Gastrocnemius medialis (tissue), 4 donors: ENCODE measurements at regions of chr1 and their contacts with region 1.

Region 1: DNA sequence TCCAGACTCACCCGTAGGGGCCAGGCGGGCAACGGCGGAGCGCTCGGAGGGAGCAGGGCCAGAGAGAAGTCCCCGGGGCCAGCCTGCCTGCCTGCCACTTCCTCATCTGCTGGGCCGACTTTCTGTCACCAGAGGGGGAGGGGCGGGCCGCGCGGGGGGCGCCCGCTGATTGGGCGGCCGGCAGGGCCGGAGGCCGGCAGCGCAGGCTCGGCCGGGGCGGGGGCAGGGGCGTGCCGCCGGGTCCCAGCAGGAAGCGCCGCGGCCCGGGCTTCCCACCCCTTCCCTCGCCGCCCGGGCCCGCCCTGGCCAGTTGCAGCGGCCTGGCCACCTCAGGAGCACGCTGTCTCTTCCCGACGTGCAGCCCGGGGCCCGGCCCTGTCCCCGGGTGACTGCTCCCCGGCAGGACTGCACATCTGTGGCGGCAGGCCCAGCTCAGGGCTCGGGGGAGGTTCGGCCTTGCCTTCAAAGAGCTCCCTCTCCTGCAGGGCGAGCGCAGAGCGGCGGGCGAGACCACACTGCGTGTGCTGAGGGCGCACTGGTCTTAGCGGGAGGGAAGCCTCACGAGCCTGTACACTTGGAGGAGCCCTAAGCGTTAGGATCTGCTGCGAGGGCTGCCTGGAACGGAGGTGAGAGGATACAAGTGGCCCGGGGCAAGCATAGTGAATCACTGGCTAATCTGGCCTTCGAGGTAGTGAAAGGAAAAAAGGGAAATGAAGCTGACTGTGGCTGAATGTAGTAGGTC is at the start of gene ELOVL1:
- DNase-seq: peak; percentile 80 to 89
- ATAC-seq: peak; percentile 90 to 93
- H3K4me3 ChIP-seq: peak within 1 kb of the TSS; percentile 86 to 95 (median 94)
- H3K27ac ChIP-seq: peak within 1 kb of the TSS; percentile 89 to 97 (median 94)
- H3K4me1 ChIP-seq: peaks cover 17 to 24% of the 10 kb centered on the region in 2 donors
- H3K27me3 ChIP-seq: no peaks in the 10 kb centered on the region
- CTCF ChIP-seq: peak in 4 of 5 experiments; percentile 12 to 41 (median 28)
- POLR2A ChIP-seq: peak; percentile 66 to 75
- total RNA-seq, gene ELOVL1: 19.6 to 26.7 (median 21.4) TPM

Region 2: GRCh38 chr1:43171876-43172526 is 196.1 kb before region 1 on chr1 and contains the starts of genes CFAP57 and EBNA1BP2:
- in situ Hi-C with region 1: no loop called
- intact Hi-C with region 1: loop called (anchors 5 kb)
- DNase-seq: peak; percentile 79 to 90
- ATAC-seq: peak; percentile 99 to 100
- H3K4me3 ChIP-seq: peak within 1 kb of the TSS; percentile 85 to 94 (median 92)
- H3K27ac ChIP-seq: peak within 1 kb of the TSS; percentile 50 to 81 (median 74)
- H3K4me1 ChIP-seq: peaks cover 14% of the 10 kb centered on the region in 2 donors
- H3K27me3 ChIP-seq: peaks cover 0 to 8% (median 0%) of the 10 kb centered on the region in 3 donors
- CTCF ChIP-seq: no peak
- POLR2A ChIP-seq: peak in 1 of 2 donors; percentile 29
- total RNA-seq, gene CFAP57: 0.10 to 0.13 TPM in 2 of 4 donors, not detected in the others
- total RNA-seq, gene EBNA1BP2: 41.2 to 68.4 (median 59.1) TPM

Region 3: DNA sequence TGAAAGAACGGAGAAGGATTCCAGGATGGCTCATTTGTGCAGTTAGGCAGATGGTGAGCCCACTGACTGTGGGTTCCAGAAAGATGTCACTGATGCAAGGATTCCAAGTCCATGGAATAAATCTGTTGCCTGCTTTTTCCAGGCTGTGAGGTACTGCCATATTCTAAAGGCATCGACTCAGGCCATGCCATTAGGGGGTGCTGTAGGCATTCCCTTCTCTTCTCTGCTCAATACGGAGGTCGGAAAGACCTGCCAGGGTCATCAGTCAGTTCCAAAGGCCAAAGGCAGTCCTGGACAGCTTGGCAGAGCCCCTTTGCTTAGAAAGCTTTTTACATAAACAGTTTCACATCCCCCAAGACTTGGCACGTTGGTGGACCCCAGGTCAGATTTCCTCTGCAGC is 130.0 kb before region 1 on chr1:
- in situ Hi-C with region 1: no loop called
- intact Hi-C with region 1: loop called (anchors 1 kb)
- DNase-seq: peak in 1 of 2 donors; percentile 44
- ATAC-seq: peak; percentile 66 to 80
- H3K4me3 ChIP-seq: no peak overlapping the region
- H3K27ac ChIP-seq: peak overlapping the region in 1 of 4 donors; percentile 18
- H3K4me1 ChIP-seq: no peaks in the 10 kb centered on the region
- H3K27me3 ChIP-seq: no peaks in the 10 kb centered on the region
- CTCF ChIP-seq: peak in 4 of 5 experiments; percentile 31 to 55 (median 53)
- POLR2A ChIP-seq: no peak

Region 4: DNA sequence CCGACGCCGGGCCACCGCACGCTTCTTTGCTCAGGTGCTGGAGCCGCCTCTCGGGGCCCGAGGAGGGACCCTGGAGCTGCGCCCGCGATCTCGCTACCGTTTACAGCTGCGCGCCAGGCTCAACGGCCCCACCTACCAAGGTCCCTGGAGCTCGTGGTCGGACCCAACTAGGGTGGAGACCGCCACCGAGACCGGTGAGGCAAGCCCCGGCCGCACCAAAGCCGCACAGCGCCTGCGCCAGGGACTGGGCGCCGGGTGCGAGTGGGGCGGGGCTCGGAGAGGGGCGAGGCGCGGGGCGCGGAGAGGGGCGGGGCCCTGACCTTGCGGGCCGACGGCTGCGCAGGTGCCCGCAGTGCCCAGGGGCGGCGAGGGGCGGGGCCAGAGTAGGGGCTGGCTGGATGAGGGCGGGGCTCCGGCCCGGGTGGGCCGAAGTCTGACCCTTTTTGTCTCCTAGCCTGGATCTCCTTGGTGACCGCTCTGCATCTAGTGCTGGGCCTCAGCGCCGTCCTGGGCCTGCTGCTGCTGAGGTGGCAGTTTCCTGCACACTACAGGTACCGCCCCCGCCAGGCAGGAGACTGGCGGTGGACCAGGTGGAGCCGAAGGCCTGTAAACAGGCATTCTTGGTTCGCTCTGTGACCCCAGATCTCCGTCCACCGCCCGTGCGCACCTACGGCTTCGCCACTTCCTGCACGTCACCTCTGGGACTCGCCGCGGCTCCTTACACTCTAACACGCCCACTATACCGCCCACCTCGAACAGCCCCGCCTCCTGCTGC is 19.1 kb before region 1 on chr1:
- in situ Hi-C with region 1: no loop called
- intact Hi-C with region 1: loop called (anchors 1 kb)
- DNase-seq: peak; percentile 46 to 78
- ATAC-seq: peak; percentile 71 to 83
- H3K4me3 ChIP-seq: peak overlapping the region; percentile 64 to 83 (median 70)
- H3K27ac ChIP-seq: peak overlapping the region; percentile 66 to 85 (median 78)
- H3K4me1 ChIP-seq: peaks cover 16 to 18% of the 10 kb centered on the region in 2 donors
- H3K27me3 ChIP-seq: no peaks in the 10 kb centered on the region
- CTCF ChIP-seq: no peak
- POLR2A ChIP-seq: peak; percentile 30 to 37

Region 5: DNA sequence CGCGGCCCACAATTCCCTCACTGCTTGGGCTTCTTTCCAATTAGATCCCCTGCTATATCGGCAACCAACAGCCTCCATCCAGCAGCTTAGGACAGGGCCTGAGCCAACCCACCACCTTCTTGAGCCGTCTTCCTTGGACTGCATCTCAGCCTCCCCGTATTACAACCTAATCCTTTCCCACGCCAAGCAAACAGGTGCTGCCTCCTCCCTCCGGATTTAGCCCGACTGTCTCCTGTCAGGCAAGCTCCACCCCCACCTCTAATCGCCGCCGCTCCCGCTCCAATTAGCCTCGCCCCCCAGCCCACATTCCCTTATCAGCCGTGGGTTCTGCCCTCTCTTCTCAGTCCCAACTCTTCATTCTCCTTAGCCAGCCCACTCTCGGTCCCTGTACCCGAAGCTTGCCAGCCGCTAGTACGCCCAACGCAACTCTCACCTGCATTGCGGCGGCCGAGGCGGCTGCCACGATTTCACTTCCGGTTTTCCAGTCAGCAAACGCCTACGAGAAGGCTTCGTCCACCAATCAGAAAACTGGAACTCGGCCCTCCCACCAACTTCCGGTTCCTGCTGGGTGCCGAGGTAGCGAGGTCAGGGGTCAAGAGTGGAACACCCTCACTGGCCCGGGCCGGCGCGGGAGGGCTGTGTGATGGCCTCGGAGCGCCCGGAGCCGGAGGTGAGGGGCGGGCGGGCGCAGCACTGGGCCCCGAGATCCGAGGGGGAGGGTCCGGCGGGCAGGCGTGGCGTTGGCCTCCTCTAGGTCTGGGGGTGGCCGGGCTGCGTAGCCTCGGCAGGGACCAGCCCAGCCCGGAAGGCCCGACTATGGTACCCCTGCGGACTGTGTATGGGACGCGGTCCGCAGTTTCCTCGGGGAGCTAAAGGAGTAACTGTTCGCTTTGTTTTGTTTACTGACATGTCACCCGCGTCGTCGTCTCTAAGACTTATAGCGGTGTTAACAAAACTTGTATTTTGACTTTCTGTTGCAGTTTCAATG is 21.5 kb after region 1 on chr1 and contains the starts of genes MED8 and SZT2:
- in situ Hi-C with region 1: no loop called
- intact Hi-C with region 1: loop called (anchors 1 kb)
- DNase-seq: peak; percentile 92 to 97
- ATAC-seq: peak; percentile 99 to 100
- H3K4me3 ChIP-seq: peak within 1 kb of the TSS; percentile 81 to 96 (median 92)
- H3K27ac ChIP-seq: peak within 1 kb of the TSS; percentile 88 to 94 (median 90)
- H3K4me1 ChIP-seq: peaks cover 25 to 26% of the 10 kb centered on the region in 2 donors
- H3K27me3 ChIP-seq: no peaks in the 10 kb centered on the region
- CTCF ChIP-seq: no peak
- POLR2A ChIP-seq: peak; percentile 70 to 86
- total RNA-seq, gene MED8: 14.9 to 30.8 (median 23.8) TPM
- total RNA-seq, gene SZT2: 15.9 to 20.9 (median 17.9) TPM

Region 6: DNA sequence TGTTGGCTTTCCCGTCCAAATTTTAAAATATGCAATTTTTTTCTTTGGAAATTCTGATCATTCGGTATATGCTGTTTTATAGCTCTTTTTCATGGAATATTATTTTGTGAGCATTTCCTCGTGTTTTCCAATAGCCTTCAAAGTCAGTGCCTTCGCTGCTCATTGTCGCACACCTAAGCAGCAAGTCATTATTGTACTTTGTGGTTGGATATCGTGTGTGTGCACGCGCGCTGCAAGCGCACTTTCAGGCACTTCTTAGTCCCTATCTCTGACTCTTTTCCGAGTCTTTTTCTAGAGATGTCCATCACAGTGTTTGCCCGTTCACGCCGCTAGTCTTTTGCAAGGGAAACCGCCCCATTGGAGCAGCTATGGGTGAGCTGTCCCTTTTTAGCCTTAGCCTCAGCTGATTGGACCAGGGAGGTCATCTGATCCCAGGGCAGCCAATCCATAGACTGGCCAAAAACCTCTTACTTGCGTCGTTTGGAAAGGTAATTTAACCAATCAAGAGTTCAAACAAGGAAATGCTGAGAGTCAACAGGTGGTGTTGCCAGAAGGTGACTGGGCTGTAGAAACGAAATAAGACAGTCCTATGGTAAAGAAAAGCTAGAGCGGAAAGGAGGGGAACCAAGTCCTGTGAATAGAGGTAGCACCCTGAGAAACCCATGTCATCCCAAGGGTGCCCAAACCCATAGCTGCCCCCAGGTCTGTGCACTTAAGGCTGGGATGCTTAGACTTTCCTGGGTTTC is 86.4 kb after region 1 on chr1:
- in situ Hi-C with region 1: no loop called
- intact Hi-C with region 1: loop called (anchors 5 kb)
- DNase-seq: peak; percentile 63 to 79
- ATAC-seq: peak; percentile 90 to 93
- H3K4me3 ChIP-seq: peak overlapping the region; percentile 50 to 72 (median 64)
- H3K27ac ChIP-seq: peak overlapping the region; percentile 77 to 89 (median 82)
- H3K4me1 ChIP-seq: peaks cover 4 to 14% of the 10 kb centered on the region in 2 donors
- H3K27me3 ChIP-seq: no peaks in the 10 kb centered on the region
- CTCF ChIP-seq: peak in 2 of 5 experiments; percentile 12 to 29
- POLR2A ChIP-seq: no peak